ENCODE measurements at regions of chr5 and their contacts with region 1.

Region 1: DNA sequence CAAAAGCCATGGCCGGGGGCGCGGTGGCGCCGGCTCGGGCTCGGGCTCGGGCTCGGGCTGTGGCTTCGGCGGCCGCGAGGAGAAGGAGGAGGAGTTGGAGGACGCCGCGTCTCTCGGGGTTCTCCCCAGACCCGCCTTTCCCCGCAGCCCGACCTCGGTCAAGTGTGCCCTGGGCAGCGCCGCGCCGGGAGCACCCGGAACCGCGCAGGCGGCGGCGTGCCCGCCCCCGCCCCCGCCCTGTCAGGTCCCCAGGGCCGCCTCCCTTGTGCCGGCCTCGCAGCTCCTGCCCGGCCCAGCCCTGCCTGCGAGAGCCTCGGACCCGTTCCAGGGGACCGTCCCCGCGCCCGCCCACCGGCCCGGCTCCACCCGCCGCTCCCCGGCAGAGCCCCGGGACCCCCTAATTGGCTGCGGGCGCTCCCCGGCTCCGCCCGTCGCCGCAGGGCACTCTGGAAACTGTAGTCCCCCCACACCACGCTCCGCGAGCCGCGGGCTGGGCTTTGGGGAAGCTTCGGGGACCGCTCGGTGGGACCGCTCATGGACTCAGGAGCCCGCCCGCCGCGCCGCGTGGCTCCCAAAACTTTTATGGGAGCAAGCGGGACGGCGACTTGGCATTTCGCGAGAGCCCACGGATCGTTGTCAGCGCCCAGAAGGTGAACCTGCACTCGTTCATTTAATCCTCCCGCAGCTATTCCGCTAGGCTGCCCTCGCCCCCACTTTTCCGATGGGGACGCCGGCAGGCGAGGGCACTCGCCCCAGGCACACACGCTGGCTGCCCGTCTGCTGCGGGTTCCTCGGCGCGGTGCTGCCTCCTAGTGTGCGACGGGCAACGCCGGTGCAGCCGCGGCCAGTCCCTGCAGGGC is at the start of gene STK10:
- DNase-seq: peak; percentile 93
- H3K4me3 Mint-ChIP-seq: peak within 1 kb of the TSS; percentile 99
- H3K27ac Mint-ChIP-seq: peak within 1 kb of the TSS; percentile 99
- H3K4me1 Mint-ChIP-seq: peaks cover 25% of the 10 kb centered on the region
- H3K27me3 Mint-ChIP-seq: no peaks in the 10 kb centered on the region
- total RNA-seq, gene STK10: 98.2 to 104 TPM

Region 2: DNA sequence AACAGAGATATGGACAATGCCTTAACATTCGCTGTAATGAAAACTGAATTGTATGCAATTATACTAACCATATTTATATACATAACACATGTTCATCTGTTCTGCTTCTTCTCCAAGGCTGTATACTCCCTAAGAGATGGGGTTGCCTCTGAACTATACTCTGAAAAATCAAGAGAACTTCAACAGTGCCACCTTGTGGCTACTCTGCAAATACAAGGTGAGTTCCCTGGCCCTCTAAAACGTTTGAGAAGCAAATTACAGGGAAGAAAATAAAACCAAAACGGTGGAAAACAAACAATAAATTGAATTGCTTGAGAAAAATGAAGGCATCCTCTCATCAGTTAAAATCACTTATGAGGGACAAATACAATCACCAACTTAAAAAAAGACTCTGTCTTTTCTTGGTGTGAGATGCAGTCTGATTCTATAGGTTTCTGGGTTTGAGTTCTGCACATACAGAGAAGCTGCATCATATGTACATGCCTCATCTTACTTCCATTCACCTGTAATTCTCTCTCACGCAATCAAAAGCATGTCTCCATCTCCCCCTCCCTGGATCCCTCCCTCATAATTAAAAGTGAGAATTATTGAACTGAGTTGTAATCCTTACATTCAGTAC is 280.4 kb before region 1 on chr5:
- CTCF ChIA-PET with region 1: interaction called, 14 read pairs
- POLR2A ChIA-PET with region 1: no interaction called
- intact Hi-C with region 1: loop called (anchors 5 kb)
- DNase-seq: peak; percentile 46
- H3K4me3 Mint-ChIP-seq: no peak overlapping the region
- H3K27ac Mint-ChIP-seq: peak overlapping the region; percentile 74
- H3K4me1 Mint-ChIP-seq: peaks cover 60% of the 10 kb centered on the region
- H3K27me3 Mint-ChIP-seq: no peaks in the 10 kb centered on the region

Region 3: GRCh38 chr5:172059661-172060100 is 128.6 kb before region 1 on chr5:
- CTCF ChIA-PET with region 1: interaction called, 12 read pairs
- POLR2A ChIA-PET with region 1: no interaction called
- intact Hi-C with region 1: no loop called
- DNase-seq: no peak
- H3K4me3 Mint-ChIP-seq: no peak overlapping the region
- H3K27ac Mint-ChIP-seq: no peak overlapping the region
- H3K4me1 Mint-ChIP-seq: peaks cover 4% of the 10 kb centered on the region
- H3K27me3 Mint-ChIP-seq: no peaks in the 10 kb centered on the region

Region 4: DNA sequence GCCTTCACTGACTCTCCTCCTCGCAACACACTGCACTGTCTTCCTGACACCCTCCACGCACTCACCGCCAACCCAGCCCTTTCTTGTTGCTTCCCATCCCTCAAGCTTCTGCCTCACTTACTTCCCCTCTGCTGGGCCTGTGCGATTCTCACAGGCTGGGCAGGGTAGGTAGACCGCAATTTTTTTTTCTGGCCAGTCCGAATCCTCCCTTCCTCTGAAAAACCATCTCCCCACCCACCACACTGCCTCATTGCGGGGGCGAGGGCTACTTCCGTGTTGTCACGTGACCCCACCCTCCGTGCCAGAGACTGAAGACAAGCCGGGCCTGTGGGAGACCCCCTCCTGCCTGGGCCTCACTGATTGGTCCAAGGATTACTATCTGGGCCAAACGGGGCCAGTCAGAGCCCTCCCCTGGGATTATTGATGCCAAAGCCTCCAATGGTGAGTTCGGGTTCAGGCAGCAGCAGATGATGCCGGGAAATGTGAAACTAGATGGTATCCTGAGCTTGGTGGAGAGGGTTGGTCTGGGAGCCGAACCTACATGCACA is 73.3 kb before region 1 on chr5:
- CTCF ChIA-PET with region 1: interaction called, 59 read pairs
- POLR2A ChIA-PET with region 1: interaction called, 70 read pairs
- intact Hi-C with region 1: loop called (anchors 1 kb)
- DNase-seq: peak; percentile 95
- H3K4me3 Mint-ChIP-seq: peak overlapping the region; percentile 83
- H3K27ac Mint-ChIP-seq: peak overlapping the region; percentile 99
- H3K4me1 Mint-ChIP-seq: peaks cover 73% of the 10 kb centered on the region
- H3K27me3 Mint-ChIP-seq: no peaks in the 10 kb centered on the region

Region 5: DNA sequence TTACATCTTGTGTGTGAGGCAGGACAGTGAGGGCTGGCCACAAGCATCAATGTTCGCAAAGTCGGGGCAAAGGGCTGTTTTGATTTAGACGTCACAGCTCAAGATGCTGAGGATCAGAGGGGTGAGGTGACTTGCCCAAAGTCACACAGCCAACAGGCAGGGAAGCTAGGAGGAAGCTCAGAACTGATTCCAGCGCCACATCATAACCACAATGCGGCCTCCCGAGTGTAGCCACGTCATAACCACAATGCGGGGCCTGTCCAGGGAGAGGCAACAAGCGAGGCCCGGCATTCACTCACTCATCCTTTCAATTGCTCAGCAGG is 14.5 kb before region 1 on chr5:
- CTCF ChIA-PET with region 1: interaction called, 100 read pairs
- POLR2A ChIA-PET with region 1: interaction called, 166 read pairs
- intact Hi-C with region 1: loop called (anchors 1 kb)
- DNase-seq: peak; percentile 95
- H3K4me3 Mint-ChIP-seq: peak overlapping the region; percentile 89
- H3K27ac Mint-ChIP-seq: peak overlapping the region; percentile 99
- H3K4me1 Mint-ChIP-seq: peaks cover 95% of the 10 kb centered on the region
- H3K27me3 Mint-ChIP-seq: no peaks in the 10 kb centered on the region

Region 6: GRCh38 chr5:172293054-172293744 is 104.9 kb after region 1 on chr5:
- CTCF ChIA-PET with region 1: interaction called, 21 read pairs
- POLR2A ChIA-PET with region 1: no interaction called
- intact Hi-C with region 1: loop called (anchors 1 kb)
- DNase-seq: peak; percentile 72
- H3K4me3 Mint-ChIP-seq: no peak overlapping the region
- H3K27ac Mint-ChIP-seq: no peak overlapping the region
- H3K4me1 Mint-ChIP-seq: no peaks in the 10 kb centered on the region
- H3K27me3 Mint-ChIP-seq: peaks cover 4% of the 10 kb centered on the region